ENCODE measurements at regions of chr6 and their contacts with region 1.

Region 1: GRCh38 chr6:21593412-21593926 is at the start of gene SOX4:
- DNase-seq: peak; percentile 99
- H3K4me3 ChIP-seq: peak within 1 kb of the TSS; percentile 86
- H3K27ac ChIP-seq: peak within 1 kb of the TSS; percentile 89
- H3K4me1 ChIP-seq: peaks cover 15% of the 10 kb centered on the region
- H3K27me3 ChIP-seq: no peaks in the 10 kb centered on the region
- CTCF ChIP-seq: no peak
- total RNA-seq, gene SOX4: 50.7 and 59.4 TPM in 2 replicates

Region 2: GRCh38 chr6:20564269-20564668 is 1029.2 kb before region 1 on chr6:
- CTCF ChIA-PET with region 1: interaction called, 13 read pairs
- POLR2A ChIA-PET with region 1: no interaction called
- intact Hi-C with region 1: loop called (anchors 2 kb)
- DNase-seq: peak; percentile 63
- H3K4me3 ChIP-seq: peak overlapping the region; percentile 12
- H3K27ac ChIP-seq: peak overlapping the region; percentile 52
- H3K4me1 ChIP-seq: peaks cover 48% of the 10 kb centered on the region
- H3K27me3 ChIP-seq: no peaks in the 10 kb centered on the region
- CTCF ChIP-seq: peak; percentile 71

Region 3: DNA sequence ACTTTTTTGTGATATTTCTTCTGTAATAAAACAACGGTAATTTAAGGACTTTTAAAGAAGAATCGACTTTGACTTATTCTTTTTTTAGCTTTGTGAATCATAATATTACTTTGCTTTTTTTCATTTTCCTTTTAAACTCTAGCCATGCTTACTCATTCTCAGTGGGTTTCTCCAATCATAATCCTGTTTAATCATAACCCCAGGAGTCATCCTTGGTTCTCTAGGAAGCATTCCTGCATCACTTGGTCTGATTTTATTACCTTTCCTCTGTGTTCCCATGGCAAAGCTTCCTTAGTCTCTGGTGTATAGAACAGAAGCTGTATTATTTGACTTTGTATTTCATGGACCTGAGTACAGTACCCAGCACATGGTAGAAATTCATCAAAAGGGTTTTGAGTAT is 835.7 kb before region 1 on chr6:
- CTCF ChIA-PET with region 1: no interaction called
- POLR2A ChIA-PET with region 1: interaction called, 3 read pairs
- intact Hi-C with region 1: loop called (anchors 1 kb)
- DNase-seq: peak; percentile 80
- H3K4me3 ChIP-seq: no peak overlapping the region
- H3K27ac ChIP-seq: peak overlapping the region; percentile 87
- H3K4me1 ChIP-seq: peaks cover 38% of the 10 kb centered on the region
- H3K27me3 ChIP-seq: no peaks in the 10 kb centered on the region
- CTCF ChIP-seq: no peak

Region 4: GRCh38 chr6:21033575-21034026 is 559.9 kb before region 1 on chr6:
- CTCF ChIA-PET with region 1: no interaction called
- POLR2A ChIA-PET with region 1: no interaction called
- intact Hi-C with region 1: no loop called
- DNase-seq: no peak
- H3K4me3 ChIP-seq: no peak overlapping the region
- H3K27ac ChIP-seq: no peak overlapping the region
- H3K4me1 ChIP-seq: peaks cover 24% of the 10 kb centered on the region
- H3K27me3 ChIP-seq: no peaks in the 10 kb centered on the region
- CTCF ChIP-seq: no peak

Region 5: DNA sequence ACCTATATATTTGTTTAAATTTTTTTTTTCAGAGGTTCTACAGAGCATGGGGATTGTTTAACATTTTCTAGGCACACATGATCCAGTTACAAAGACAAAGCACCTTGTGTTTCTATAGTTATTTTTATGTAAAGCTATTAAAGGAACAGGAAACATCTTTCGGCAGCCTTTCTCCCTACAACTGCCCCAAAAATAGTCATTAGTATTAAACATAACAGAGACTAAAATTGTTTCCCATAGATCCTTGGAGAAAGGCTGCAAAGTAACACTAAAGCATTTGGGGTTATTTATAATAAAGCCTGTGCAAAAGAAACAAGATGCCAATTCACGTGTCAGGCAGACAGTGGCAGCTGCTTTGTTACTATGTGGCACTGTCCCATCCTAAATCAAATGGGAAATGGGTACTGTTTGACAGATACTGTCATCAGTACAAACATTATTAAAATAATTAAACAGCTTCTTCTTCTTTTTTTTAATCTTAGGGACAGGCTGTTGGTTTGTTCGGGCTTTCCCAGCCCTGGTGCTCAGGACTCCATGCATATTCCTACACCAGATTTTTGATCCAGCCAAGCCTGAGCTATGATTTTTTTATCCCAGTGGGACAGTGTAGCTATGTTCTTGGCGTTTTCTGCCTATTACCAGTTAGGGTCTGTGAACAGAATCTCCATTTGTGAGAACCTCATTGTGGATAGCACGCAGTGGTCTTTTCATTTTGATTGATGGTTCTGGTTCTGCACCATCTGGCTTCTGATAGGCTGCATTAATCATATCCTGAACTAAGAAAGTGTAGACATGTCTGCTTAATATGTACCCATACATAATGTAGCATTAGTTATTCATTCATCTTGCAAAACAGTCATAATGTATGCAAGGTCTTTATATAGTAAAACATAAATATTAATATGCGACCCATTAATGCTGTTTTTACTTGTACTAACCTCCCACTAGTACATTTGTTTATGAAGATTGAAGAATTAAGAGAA is 460.3 kb before region 1 on chr6:
- CTCF ChIA-PET with region 1: interaction called, 12 read pairs
- POLR2A ChIA-PET with region 1: no interaction called
- intact Hi-C with region 1: no loop called
- DNase-seq: peak; percentile 55
- H3K4me3 ChIP-seq: no peak overlapping the region
- H3K27ac ChIP-seq: peak overlapping the region; percentile 26
- H3K4me1 ChIP-seq: peaks cover 30% of the 10 kb centered on the region
- H3K27me3 ChIP-seq: no peaks in the 10 kb centered on the region
- CTCF ChIP-seq: no peak

Region 6: DNA sequence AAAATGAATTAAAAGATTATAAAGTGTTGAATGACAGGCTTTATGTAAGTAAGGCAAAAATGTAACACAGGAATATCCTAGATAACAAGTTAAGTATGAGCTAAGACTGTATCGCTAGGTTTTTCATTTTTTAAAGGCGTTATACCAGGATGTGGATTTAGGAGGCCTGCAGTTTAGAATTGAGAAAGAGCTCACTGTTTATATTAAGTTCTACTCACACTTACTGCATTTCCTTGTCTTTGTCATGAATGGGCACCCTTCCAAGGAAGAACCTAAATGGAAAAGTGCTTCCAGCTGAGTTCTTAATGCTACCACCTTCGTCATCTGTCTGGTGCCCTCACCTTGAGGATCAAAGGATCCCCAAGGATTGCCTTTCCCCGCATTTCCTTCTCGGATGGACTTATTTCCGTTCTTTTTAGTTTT is 148.8 kb after region 1 on chr6:
- CTCF ChIA-PET with region 1: interaction called, 4 read pairs
- POLR2A ChIA-PET with region 1: no interaction called
- intact Hi-C with region 1: loop called (anchors 5 kb)
- DNase-seq: peak; percentile 94
- H3K4me3 ChIP-seq: no peak overlapping the region
- H3K27ac ChIP-seq: peak overlapping the region; percentile 6
- H3K4me1 ChIP-seq: peaks cover 32% of the 10 kb centered on the region
- H3K27me3 ChIP-seq: peaks cover 28% of the 10 kb centered on the region
- CTCF ChIP-seq: no peak

Region 7: DNA sequence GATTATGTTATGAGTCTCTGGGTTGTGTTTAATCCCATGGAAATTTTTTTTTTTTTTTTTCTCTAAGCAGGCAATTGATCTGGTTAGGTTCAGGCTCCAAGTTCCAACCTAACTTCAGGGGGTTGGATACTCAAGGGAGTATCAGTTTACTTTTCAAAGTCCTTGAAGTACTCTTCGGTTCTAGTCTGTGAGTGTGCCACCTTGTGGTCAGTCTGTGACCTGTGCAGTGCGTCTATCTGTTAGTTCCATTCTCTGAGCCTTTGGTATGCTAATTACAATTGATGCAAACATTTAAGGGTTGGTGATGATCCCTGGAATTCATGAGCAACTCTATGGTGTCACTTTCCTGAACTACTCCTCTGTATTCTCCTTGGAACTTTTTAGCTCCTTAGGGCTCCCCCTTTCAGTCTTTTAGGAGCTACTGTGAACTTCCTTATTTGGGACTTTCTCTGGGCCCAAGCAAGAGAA is 342.1 kb after region 1 on chr6:
- CTCF ChIA-PET with region 1: no interaction called
- POLR2A ChIA-PET with region 1: no interaction called
- intact Hi-C with region 1: loop called (anchors 2 kb)
- DNase-seq: peak; percentile 64
- H3K4me3 ChIP-seq: no peak overlapping the region
- H3K27ac ChIP-seq: no peak overlapping the region
- H3K4me1 ChIP-seq: no peaks in the 10 kb centered on the region
- H3K27me3 ChIP-seq: no peaks in the 10 kb centered on the region
- CTCF ChIP-seq: peak; percentile 73